CD8-positive, alpha-beta T cell (primary cell): ENCODE measurements at regions of chr22 and their contacts with region 1.

Region 1: GRCh38 chr22:50562523-50563412 is at the start of gene SYCE3:
- DNase-seq: peak; percentile 93 to 98 (median 97)
- ATAC-seq: peak; percentile 98
- H3K4me3 ChIP-seq: peak within 1 kb of the TSS; percentile 57 to 67
- H3K4me3 Mint-ChIP-seq: peak within 1 kb of the TSS; percentile 94
- H3K27ac ChIP-seq: peak within 1 kb of the TSS; percentile 17 to 47
- H3K27ac Mint-ChIP-seq: peak within 1 kb of the TSS; percentile 91
- H3K4me1 ChIP-seq: peaks cover 10% of the 10 kb centered on the region
- H3K4me1 Mint-ChIP-seq: peaks cover 20% of the 10 kb centered on the region
- H3K27me3 ChIP-seq: no peaks in the 10 kb centered on the region
- H3K27me3 Mint-ChIP-seq: no peaks in the 10 kb centered on the region
- CTCF ChIP-seq: peak; percentile 91
- total RNA-seq, gene SYCE3: not detected

Region 2: DNA sequence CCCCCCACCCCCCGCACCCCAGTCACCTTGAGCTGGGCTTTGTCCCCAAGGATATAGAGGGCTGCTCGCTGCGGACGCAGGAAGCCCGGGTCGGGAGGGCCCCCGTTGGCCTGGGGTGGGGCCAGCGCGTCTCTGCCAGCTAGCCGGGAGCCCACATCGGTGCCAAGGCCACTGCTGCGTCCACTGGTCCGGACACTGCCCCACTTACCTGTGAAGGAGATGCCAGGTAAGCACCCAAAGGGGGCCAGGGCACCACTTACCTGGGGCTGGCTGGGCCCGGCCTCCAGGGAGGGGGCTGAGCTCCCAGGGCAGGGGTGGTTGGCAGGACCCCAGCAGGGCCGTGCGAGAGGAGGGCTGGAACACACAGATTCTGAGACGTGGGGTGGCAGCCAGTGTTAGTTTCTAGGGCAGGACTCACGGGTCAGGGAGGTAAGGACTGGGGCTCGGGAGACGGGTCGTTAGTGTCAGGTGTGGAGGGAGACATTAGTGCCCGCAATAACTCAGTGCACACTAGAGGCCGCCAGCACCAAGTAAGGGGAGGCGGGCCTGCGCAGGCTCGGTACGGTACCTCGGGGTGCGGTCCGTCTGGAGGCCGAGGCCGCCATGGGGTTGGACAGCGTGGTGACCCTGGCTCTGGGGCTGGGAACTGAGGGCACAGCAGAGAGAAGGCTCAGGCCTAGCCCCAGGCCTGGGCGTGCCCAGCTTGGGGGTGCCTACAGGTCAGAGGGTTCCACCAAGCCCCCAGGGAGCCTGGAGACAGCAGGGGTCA is 106.1 kb before region 1 on chr22:
- CTCF ChIA-PET with region 1: no interaction called
- POLR2A ChIA-PET with region 1: no interaction called
- intact Hi-C with region 1: no loop called
- DNase-seq: no peak
- ATAC-seq: peak; percentile 58
- H3K4me3 ChIP-seq: no peak overlapping the region
- H3K4me3 Mint-ChIP-seq: no peak overlapping the region
- H3K27ac ChIP-seq: no peak overlapping the region
- H3K27ac Mint-ChIP-seq: peak overlapping the region; percentile 66
- H3K4me1 ChIP-seq: no peaks in the 10 kb centered on the region
- H3K4me1 Mint-ChIP-seq: peaks cover 3% of the 10 kb centered on the region
- H3K27me3 ChIP-seq: no peaks in the 10 kb centered on the region
- H3K27me3 Mint-ChIP-seq: no peaks in the 10 kb centered on the region
- CTCF ChIP-seq: no peak

Region 3: DNA sequence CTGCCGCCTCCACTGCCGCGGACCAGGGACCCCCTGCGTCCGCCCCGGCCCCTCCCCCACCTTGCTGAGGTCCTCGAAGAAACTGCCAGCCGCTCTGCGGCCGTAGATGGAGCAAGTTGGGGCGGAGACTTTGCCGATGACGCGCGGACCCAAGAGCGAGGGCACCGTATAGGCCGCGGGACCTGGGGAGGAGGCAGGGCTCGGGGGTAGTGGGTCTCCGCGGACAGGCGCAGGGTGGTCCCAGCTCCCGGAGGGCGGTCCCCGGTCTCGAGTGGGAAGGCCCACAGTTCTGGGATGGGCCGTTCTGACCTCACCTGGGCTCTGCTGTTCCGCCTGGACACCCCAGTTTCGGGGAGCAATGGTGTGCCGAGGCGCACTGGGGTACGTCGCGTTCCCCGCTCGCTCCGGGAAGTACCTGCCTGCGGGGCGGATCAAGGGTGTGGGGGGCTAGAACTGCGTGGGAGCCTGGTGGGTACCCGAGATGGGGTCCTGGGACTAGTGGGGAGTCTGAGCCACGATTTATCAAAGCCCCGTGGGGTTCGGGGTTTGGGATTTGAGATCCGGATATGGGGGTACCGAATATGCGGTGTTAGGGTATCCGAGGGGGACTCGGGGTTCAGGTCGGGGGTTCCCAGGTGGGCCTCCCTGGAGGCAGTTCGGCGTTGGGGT is 31.8 kb before region 1 on chr22:
- CTCF ChIA-PET with region 1: interaction called, 35 read pairs
- POLR2A ChIA-PET with region 1: interaction called, 19 read pairs
- intact Hi-C with region 1: loop called in 1 of 2 experiments (anchors 1 kb)
- DNase-seq: peak; percentile 67 to 89 (median 75)
- ATAC-seq: peak; percentile 52
- H3K4me3 ChIP-seq: peak overlapping the region; percentile 64 to 70
- H3K4me3 Mint-ChIP-seq: peak overlapping the region; percentile 87
- H3K27ac ChIP-seq: peak overlapping the region; percentile 81 to 95
- H3K27ac Mint-ChIP-seq: peak overlapping the region; percentile 96
- H3K4me1 ChIP-seq: peaks cover 31% of the 10 kb centered on the region
- H3K4me1 Mint-ChIP-seq: peaks cover 25% of the 10 kb centered on the region
- H3K27me3 ChIP-seq: peaks cover 0 to 2% of the 10 kb centered on the region in 2 experiments
- H3K27me3 Mint-ChIP-seq: peaks cover 8% of the 10 kb centered on the region
- CTCF ChIP-seq: no peak

Region 4: DNA sequence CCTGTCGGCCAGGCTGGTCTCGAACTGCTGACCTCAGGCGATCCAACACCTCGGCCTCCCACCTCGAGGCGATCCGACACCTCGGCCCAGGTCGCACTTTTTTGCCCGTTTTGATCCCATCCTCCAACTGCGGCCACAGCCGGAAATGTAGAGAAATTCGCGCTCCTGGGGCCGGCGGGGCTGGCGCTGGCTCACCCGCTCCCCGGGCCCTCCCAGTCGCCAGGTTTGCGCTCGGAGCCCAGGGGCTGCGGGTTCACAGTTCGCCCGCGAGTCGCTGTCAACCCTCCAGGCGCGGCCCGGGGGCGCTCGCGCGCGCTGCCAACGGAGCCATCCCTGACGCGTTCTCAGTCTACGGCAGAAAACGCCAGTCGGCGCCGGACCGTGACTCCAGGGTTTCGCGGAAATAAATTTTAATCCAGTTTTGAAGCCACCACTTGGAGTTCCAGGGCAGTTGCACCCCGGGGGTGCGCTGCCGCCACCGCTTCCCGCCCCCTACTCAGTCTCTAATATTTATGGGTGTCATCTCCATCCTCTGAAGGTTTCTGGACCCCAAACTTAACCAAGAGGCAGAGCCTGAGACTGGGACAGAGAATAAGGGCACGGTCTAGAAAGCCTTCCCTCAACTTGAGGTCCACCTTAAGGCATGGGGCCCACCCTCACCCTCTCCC is 18.6 kb before region 1 on chr22:
- CTCF ChIA-PET with region 1: interaction called, 7 read pairs
- POLR2A ChIA-PET with region 1: interaction called, 11 read pairs
- intact Hi-C with region 1: loop called (anchors 1 to 2 kb)
- DNase-seq: peak; percentile 62 to 92 (median 84)
- ATAC-seq: peak; percentile 54
- H3K4me3 ChIP-seq: peak overlapping the region; percentile 43 to 48
- H3K4me3 Mint-ChIP-seq: peak overlapping the region; percentile 54
- H3K27ac ChIP-seq: peak overlapping the region; percentile 40 to 81
- H3K27ac Mint-ChIP-seq: peak overlapping the region; percentile 57
- H3K4me1 ChIP-seq: peaks cover 42% of the 10 kb centered on the region
- H3K4me1 Mint-ChIP-seq: peaks cover 45% of the 10 kb centered on the region
- H3K27me3 ChIP-seq: no peaks in the 10 kb centered on the region
- H3K27me3 Mint-ChIP-seq: no peaks in the 10 kb centered on the region
- CTCF ChIP-seq: peak; percentile 75

Region 5: DNA sequence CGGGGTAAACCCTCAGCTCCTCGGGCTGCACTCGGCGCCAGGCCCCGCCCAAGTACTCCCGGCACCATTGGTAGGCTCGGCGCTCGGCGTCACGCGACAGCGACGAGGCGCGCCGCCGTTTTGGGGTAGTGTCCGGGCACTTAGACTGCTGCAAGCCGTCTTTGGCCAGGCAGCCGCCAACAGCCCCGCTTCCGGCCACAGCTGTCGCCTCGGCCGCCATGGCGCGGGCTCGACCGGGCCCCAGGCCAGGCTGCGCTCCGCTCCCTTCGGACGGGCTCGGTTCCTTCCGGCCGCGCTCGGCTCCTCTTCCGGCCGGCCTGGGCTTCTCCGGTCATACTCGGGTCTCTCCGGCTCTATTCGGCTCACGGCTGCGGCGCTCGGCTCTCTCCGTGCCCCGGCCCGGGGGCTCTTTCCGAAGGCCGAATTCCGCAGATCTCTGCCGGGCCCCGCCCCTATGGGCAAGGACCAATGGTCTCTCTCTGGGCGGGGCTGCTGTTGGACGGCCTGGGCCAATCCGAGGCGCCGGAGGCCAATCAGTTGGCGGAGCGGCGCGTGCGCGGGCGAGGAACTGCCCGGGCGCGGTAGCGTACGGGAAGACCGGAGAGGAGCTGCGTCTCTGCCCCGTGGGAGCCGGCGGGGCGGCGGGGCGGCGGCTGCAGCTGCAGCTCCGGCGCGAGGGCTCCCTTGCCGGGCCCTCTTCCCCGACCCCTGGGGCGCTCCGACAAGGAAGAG is 20.0 kb after region 1 on chr22 and contains the start of gene CHKB:
- CTCF ChIA-PET with region 1: interaction called, 25 read pairs
- POLR2A ChIA-PET with region 1: interaction called, 10 read pairs
- intact Hi-C with region 1: loop called (anchors 1 kb)
- DNase-seq: peak; percentile 95 to 99 (median 98)
- ATAC-seq: peak; percentile 94
- H3K4me3 ChIP-seq: peak within 1 kb of the TSS; percentile 77 to 78
- H3K4me3 Mint-ChIP-seq: peak within 1 kb of the TSS; percentile 93
- H3K27ac ChIP-seq: peak within 1 kb of the TSS; percentile 93 to 94
- H3K27ac Mint-ChIP-seq: peak within 1 kb of the TSS; percentile 97
- H3K4me1 ChIP-seq: peaks cover 16% of the 10 kb centered on the region
- H3K4me1 Mint-ChIP-seq: peaks cover 30% of the 10 kb centered on the region
- H3K27me3 ChIP-seq: no peaks in the 10 kb centered on the region
- H3K27me3 Mint-ChIP-seq: no peaks in the 10 kb centered on the region
- CTCF ChIP-seq: no peak
- total RNA-seq, gene CHKB: 112 to 115 TPM